ENCODE measurements at regions of chr11 and their contacts with region 1.

Region 1: DNA sequence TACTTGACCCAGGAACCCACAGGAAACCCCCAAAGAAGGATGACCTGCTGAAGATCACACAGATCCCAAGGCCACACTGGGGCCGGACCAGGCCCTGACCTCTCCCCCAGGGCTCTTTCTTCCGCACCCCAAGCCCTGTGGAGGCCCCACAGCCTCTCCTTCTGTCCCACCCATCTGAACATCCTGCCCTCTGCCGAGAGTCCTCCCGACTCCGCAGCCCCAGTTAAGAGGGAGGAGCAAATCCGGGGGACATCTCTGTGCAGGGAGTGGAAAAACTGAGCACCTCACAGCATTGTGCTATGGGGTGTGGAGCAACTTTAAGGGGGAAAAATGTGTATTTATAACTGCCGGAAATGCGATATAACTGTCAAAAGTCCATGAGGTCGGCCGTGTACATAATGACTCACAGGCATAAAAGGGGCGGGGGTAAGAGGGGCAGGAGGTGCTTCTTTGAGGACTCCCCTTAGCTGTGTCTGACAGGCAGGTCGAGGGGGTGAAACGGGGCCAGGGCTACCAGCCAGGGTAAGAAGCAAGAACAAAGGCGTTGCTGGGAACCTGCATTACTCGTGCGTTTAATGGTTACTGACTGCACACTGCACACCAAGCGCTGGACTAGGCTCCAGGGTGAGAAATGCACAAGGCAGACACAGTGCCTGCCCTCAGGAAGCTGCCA is 57.2 kb downstream of the WNT11 start:
- DNase-seq: no peak

Region 2: DNA sequence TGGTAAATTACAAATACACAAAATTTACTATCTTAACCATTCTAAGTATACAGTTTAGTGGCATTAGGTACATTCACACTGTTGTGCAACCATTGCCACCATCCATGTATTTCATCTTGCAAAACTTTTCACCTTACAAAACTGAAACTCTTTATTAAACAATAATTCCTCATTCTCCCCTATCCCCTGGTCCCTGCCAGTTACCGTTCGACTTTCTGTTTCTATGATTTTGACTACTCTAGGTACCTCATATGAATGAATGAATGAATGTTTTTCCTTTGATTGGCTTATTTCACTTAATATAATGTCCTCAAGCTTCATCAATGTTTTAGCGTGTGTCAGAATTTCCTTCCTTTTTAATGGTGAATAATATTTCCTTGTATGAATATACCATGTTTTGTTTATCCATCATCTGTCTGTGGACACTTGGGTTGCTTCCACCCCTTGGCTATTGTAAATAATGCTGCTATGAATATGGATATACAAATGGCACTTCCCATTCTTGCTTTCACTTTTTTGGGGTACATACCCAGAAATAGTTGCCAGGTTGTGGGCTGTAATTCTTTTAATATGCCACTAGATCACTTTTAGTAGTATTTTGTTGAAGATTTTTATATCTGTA is 241.1 kb before region 1 on chr11:
- in situ Hi-C with region 1: loop called (anchors 10 kb)
- DNase-seq: no peak

Measured in KBM-7 (cell line).